Psoas muscle (tissue), 8 donors: ENCODE measurements at regions of chr6 and their contacts with region 1.

Region 1: DNA sequence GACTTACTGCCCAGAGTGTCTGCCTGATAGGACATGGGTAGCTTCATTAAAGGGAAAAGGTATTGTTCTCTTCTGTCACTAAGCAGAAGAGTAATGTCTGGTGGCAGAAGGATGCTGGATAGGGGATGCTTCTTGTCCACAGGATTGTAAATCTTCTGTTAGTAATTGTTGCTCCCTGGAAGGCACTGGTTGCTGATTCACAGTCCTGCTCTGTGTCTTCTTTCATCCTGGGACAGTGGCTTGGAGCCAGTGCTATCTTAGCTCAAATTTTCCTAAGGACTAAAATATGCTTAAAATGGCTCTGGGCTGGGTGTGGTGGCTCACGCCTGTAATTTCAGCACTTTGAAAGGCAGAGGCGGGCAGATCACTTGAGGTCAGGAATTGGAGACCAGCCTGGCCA is 48.0 kb downstream of the SYTL3 start:
- DNase-seq: no peak
- ATAC-seq: no peak
- H3K4me3 ChIP-seq: no peak overlapping the region
- H3K27ac ChIP-seq: no peak overlapping the region
- H3K4me1 ChIP-seq: no peaks in the 10 kb centered on the region
- H3K27me3 ChIP-seq: no peaks in the 10 kb centered on the region
- CTCF ChIP-seq: no peak

Region 2: DNA sequence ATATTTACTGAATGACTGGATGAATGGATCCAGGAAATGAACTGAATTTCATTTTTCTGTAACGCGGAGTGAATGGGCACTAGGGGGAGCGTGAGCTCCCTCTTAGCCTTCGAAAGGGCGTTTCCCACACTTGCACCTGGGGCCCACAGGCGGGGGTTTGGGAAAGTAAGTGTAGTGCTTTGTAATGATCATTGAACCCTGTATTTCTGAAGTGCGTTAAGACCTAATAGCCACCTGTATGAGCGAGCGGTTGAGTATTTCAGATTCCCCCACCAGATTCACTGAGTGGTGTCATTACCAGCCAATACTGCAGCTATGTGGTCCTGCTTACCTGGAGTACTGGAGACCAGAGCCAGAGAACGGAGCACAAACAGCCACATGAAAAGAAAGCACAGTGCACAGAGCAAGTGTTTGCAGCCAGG is 37.5 kb before region 1 on chr6:
- intact Hi-C with region 1: loop called in 1 of 2 experiments (anchors 5 kb)
- DNase-seq: no peak
- ATAC-seq: no peak
- H3K4me3 ChIP-seq: no peak overlapping the region
- H3K27ac ChIP-seq: no peak overlapping the region
- H3K4me1 ChIP-seq: peaks cover 20% of the 10 kb centered on the region
- H3K27me3 ChIP-seq: no peaks in the 10 kb centered on the region
- CTCF ChIP-seq: peak; percentile 31

Region 3: DNA sequence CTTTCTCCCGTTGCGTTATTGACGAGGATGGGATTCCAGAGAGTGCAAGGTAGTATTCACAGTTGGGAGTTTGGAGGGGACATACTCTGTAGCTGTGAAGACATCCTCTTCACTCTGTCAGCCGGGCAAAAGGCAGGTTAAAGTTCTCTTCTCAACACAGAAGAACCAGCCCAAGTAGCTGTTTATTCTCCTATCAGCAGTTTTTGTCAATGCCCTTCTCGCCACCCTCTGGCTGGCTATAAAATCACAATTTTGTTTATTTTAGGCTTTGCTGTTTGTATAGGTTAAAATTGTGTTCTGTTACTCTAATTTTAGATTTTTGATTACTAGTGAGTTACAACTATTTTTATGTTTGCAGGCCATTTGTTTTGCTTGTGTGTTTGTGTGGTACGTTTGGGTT is 1155.1 kb after region 1 on chr6:
- intact Hi-C with region 1: no loop called
- DNase-seq: no peak
- ATAC-seq: no peak
- H3K4me3 ChIP-seq: no peak overlapping the region
- H3K27ac ChIP-seq: no peak overlapping the region
- H3K4me1 ChIP-seq: no peaks in the 10 kb centered on the region
- H3K27me3 ChIP-seq: no peaks in the 10 kb centered on the region
- CTCF ChIP-seq: no peak

Region 4: DNA sequence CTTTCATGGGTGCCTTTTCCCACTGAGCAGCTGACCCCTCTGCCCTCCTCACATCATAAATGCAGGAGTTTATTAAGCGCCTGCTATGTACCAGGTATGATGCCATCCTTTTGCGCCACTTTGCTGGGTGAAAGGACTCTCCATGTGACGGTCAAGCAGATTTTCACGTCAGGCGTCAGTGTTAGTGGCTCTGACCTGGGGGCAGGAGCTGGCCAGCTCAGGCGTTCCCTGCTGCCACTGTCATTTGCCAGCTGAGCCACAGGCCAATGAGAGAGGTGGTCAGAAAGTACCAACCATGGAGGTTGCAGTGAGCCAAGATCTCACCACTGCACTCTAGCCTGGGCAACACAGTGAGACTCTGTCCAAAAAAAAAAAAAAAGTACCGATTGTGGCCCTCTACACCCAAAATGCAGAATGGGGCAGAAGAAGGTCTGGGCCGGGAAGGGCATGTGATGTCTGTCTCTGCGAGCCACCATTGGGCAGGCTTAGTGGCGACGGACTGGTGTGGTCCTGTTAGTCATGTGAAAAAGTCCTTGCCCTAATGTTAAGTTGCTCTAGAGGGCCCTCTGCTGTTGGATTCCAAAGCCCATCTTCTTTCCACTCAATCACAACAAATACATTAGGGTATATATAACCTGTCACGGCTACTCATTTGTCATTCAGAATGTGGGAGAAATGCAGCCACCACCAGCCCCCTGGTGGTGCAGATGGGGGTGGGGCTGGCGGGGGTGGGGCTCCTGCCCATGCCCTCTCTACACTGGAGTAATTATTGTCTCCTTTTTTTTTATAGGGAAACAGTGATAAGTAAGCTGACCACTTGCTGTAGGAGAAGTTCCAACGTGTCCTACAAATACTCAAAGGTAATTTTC is 1405.4 kb after region 1 on chr6:
- intact Hi-C with region 1: no loop called
- DNase-seq: no peak
- ATAC-seq: peak; percentile 21 to 63 (median 46)
- H3K4me3 ChIP-seq: no peak overlapping the region
- H3K27ac ChIP-seq: no peak overlapping the region
- H3K4me1 ChIP-seq: no peaks in the 10 kb centered on the region
- H3K27me3 ChIP-seq: no peaks in the 10 kb centered on the region
- CTCF ChIP-seq: peak; percentile 32